Psoas muscle (tissue), 8 donors: ENCODE measurements at regions of chr17 and their contacts with region 1.

Region 1: GRCh38 chr17:53133876-53134275 is 688.9 kb upstream of the KIF2B start:
- DNase-seq: no peak
- ATAC-seq: peak in 1 of 4 donors; percentile 43
- H3K4me3 ChIP-seq: peak overlapping the region; percentile 19
- H3K27ac ChIP-seq: no peak overlapping the region
- H3K4me1 ChIP-seq: peaks cover 10% of the 10 kb centered on the region
- H3K27me3 ChIP-seq: no peaks in the 10 kb centered on the region
- CTCF ChIP-seq: no peak

Region 2: DNA sequence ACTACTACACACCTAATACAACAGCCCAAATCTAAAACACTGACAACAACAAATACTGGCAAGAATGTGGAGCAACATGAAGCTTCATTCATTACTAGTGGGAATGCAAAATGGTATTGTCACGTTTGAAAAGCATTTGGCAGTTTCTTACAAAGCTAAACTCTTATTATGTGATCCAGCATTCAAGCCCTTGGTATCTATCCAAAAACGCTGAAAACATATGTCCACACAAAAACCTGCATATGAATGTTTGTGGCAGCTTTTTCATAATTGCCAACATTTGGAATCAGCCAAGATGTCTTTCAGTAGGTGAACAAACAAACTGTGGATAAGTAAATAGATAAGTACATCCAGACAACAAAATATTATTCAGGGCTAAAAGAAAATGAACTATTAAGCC is 187.8 kb after region 1 on chr17:
- intact Hi-C with region 1: loop called in 1 of 2 experiments (anchors 5 kb)
- DNase-seq: no peak
- ATAC-seq: no peak
- H3K4me3 ChIP-seq: no peak overlapping the region
- H3K27ac ChIP-seq: no peak overlapping the region
- H3K4me1 ChIP-seq: no peaks in the 10 kb centered on the region
- H3K27me3 ChIP-seq: no peaks in the 10 kb centered on the region
- CTCF ChIP-seq: no peak